H1 (cell line): ENCODE measurements at regions of chr3 and their contacts with region 1.

Region 1: GRCh38 chr3:46449755-46450552 is 14.8 kb downstream of the LTF start:
- DNase-seq: peak in 1 of 2 experiments; percentile 67
- H3K4me3 ChIP-seq: no peak overlapping the region
- H3K27ac ChIP-seq: no peak overlapping the region
- H3K4me1 ChIP-seq: no peaks in the 10 kb centered on the region
- H3K27me3 ChIP-seq: no peaks in the 10 kb centered on the region
- CTCF ChIP-seq: peak; percentile 49 to 76 (median 59)
- EP300 ChIP-seq: no peak
- POLR2A ChIP-seq: no peak
- RAD21 ChIP-seq: peak; percentile 40 to 51

Region 2: DNA sequence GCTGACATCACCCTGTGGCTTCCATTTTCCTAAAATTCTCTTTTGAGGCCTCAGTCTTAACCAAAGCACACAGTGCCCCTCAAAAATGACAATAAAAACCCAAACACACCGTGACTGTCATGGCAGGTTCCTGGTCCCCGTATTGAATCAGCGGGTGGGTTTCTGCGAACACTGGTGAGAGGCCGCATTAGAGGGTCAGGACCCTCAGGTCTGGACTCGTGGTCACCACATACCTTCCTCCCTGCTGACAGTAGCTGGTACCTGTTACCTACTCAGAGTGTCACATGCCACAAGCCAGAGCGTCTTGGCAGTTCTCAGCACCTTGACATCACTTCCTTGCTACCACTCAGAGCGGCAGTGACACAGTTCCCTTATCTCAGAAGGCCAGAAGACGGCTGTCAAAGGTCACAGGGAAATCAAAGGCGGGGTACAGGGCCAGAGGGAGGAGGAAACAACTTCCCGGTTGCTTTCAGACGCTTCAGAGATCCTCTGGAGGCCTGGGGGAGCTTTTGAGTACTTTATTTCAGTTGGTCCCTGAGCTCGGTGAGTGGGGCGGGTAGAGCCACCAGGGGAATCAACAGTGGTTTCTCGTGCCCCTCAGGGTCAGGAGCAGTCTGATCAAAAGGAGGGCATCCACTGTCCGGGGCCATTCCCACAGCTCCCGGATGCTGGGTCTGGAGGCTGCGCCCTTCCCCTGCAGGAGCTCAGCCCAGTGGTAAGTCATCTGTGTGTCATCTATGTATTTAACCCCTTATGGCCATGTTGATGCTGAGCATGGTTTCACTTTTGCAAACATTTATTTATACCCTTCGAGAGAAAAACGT is 43.0 kb before region 1 on chr3 and contains the starts of genes CCR5AS and CCRL2:
- CTCF ChIA-PET with region 1: interaction called, 14 read pairs
- POLR2A ChIA-PET with region 1: no interaction called
- DNase-seq: no peak
- H3K4me3 ChIP-seq: no peak within 1 kb of the TSS
- H3K27ac ChIP-seq: no peak within 1 kb of the TSS
- H3K4me1 ChIP-seq: no peaks in the 10 kb centered on the region
- H3K27me3 ChIP-seq: no peaks in the 10 kb centered on the region; a peak in 1 of 7 replicates
- CTCF ChIP-seq: no peak
- EP300 ChIP-seq: no peak
- POLR2A ChIP-seq: no peak
- RAD21 ChIP-seq: no peak
- total RNA-seq, gene CCRL2: not detected in 2 replicates

Region 3: GRCh38 chr3:46423588-46423987 is 26.4 kb before region 1 on chr3:
- CTCF ChIA-PET with region 1: interaction called, 10 read pairs
- POLR2A ChIA-PET with region 1: no interaction called
- DNase-seq: no peak
- H3K4me3 ChIP-seq: no peak overlapping the region
- H3K27ac ChIP-seq: no peak overlapping the region
- H3K4me1 ChIP-seq: peaks cover 0 to 2% (median 1%) of the 10 kb centered on the region in 4 experiments; a peak in 4 of 7 replicates
- H3K27me3 ChIP-seq: no peaks in the 10 kb centered on the region
- CTCF ChIP-seq: no peak
- EP300 ChIP-seq: no peak
- POLR2A ChIP-seq: no peak
- RAD21 ChIP-seq: no peak

Region 4: DNA sequence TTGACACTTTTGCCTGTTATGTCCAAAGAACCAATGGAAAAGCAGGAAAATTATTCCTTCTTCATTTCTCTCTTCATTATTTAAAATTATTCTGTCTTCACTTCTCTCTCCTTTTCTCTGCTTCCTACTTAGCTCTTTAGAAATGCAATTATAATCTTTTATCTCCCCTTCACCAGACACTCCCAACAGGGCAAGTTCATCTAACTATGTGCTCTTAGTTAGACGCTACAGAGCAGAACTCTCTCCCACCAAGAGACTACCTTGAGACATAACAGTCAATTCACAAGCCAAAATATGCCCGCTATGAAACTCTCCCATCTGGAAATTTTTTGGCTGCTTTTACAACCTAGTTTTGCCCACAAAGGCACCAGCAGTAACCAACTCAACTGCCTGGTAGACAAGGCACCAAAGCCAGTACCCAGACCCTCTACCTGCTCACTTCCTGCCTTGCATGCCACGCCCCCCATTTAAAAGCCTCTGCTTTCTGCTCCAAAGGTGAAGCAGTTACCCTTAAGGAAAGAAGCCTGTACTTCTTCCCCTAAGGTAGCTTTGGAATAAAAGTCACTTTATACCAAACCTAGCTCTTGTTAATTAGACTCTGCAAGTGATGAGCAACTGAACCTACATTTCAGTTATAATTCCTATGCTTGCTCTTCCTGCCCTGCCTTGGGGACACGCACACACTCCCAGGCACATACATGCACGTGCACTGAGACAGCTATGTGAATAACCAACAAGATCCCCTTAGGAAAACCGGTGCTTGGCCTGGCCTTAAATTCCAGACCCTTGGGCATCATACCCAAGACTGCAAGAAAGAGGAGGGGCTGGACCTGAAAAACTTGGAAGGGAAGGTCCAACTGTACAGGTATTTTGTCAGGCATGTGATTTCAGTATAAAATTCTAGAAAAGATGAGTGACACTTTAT is 14.6 kb before region 1 on chr3:
- CTCF ChIA-PET with region 1: interaction called, 27 read pairs
- POLR2A ChIA-PET with region 1: no interaction called
- DNase-seq: no peak
- H3K4me3 ChIP-seq: no peak overlapping the region
- H3K27ac ChIP-seq: no peak overlapping the region
- H3K4me1 ChIP-seq: no peaks in the 10 kb centered on the region
- H3K27me3 ChIP-seq: no peaks in the 10 kb centered on the region
- CTCF ChIP-seq: no peak; a peak in 1 of 4 replicates
- EP300 ChIP-seq: no peak
- POLR2A ChIP-seq: no peak
- RAD21 ChIP-seq: no peak

Region 5: GRCh38 chr3:46462111-46462510 is 12.2 kb after region 1 on chr3:
- CTCF ChIA-PET with region 1: interaction called, 40 read pairs
- POLR2A ChIA-PET with region 1: no interaction called
- DNase-seq: no peak
- H3K4me3 ChIP-seq: no peak overlapping the region
- H3K27ac ChIP-seq: no peak overlapping the region
- H3K4me1 ChIP-seq: peaks cover 0 to 6% (median 4%) of the 10 kb centered on the region in 4 experiments; a peak in 4 of 7 replicates
- H3K27me3 ChIP-seq: peaks cover 7 to 28% (median 24%) of the 10 kb centered on the region in 4 experiments
- CTCF ChIP-seq: peak in 2 of 3 experiments; percentile 45 to 47; a peak in 2 of 4 replicates
- EP300 ChIP-seq: no peak
- POLR2A ChIP-seq: no peak
- RAD21 ChIP-seq: peak; percentile 45 to 62

Region 6: DNA sequence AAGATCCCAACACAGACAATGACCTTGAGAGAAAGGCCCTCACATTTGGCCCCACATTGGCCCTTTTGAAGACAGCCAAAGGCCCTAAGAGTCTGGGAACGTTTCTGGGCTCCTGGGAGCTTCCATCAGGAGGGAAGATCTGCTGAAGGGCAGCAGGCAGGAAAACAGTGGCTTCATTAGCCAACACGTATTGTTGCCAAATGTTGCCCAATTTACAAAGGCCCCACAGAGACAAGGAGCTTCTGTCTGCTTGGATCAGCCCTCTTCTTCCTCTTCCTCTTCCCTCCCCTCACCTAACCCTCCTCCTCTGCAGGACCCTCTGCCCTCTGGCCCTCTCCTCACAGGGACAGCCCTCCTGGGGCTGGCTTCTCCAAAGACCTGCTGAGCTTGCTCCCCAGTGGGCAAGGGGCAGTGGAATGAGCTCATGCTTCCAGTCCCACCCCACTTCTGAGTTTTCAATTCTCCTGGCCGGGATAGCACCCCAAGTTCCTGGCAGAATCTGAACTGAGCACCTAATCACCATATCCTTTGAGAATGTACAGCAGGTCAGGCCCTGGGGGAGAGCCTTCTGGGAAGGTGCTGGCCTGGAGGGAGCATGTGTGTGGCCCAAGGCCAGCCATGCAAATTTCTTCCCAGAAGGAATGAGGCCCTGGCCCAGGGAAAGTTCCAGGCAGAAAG is 19.9 kb after region 1 on chr3:
- CTCF ChIA-PET with region 1: interaction called, 40 read pairs
- POLR2A ChIA-PET with region 1: no interaction called
- DNase-seq: peak in 1 of 2 experiments; percentile 27
- H3K4me3 ChIP-seq: no peak overlapping the region
- H3K27ac ChIP-seq: no peak overlapping the region
- H3K4me1 ChIP-seq: peaks cover 0 to 5% (median 2%) of the 10 kb centered on the region in 4 experiments; a peak in 4 of 7 replicates
- H3K27me3 ChIP-seq: peaks cover 3 to 11% (median 9%) of the 10 kb centered on the region in 4 experiments
- CTCF ChIP-seq: no peak
- EP300 ChIP-seq: no peak
- POLR2A ChIP-seq: no peak
- RAD21 ChIP-seq: no peak